GM10248 (cell line): ENCODE measurements at regions of chr9 and their contacts with region 1.

Region 1: DNA sequence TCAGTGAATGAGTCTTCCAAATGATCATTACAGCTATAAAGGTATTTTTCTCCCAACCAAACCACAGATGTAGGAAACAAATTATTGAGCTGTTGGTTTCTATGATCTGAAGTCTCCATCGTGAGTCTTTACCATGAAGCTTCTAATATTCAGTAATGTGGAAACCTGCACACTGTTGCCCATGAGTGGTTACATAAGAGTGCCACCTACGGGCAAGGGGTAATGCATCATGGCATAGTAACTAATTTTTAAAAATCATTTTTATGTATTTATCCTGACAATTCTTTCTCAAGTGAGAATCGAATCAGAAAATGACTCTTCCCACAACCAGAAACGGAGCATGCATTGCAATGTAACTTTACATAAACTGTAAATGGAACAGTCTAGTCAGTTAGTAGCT is 282.5 kb upstream of the SMARCA2 start:
- DNase-seq: no peak
- CTCF ChIP-seq: peak; percentile 41

Region 2: GRCh38 chr9:1718836-1719235 is 13.8 kb before region 1 on chr9:
- CTCF ChIA-PET with region 1: interaction called, 11 read pairs
- POLR2A ChIA-PET with region 1: no interaction called
- DNase-seq: no peak
- CTCF ChIP-seq: no peak

Region 3: GRCh38 chr9:1747417-1747967 is 14.8 kb after region 1 on chr9:
- CTCF ChIA-PET with region 1: interaction called, 29 read pairs
- POLR2A ChIA-PET with region 1: no interaction called
- DNase-seq: no peak
- CTCF ChIP-seq: no peak

Region 4: DNA sequence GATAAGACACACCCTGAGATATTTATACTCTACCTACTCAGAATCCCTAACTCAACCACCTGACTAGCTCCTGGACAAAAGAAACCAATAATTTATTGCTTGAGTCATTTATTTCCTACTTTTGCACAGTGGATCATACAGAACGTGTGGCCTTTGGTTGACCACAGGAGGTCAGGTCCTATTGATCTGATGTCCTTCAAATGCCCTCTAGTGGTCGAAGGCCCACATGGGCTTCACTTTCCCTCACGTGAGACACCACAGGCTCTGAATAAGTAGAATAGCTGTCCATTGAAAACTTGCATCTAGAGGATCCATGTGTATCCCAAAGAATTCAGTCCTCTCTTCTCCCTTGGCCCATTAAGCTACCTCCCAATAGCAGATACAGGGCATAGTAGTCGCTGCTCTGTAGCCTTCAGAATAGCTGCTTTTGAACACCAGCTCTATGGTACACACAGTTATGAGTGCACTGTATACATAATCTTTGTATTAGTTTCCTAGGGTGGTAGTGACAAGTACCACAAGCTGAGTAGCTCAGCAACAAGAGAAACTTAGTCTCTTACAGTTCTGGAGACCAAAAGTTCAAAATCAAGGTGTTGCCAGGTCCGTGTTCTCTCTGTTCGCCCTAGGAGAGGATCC is 104.9 kb after region 1 on chr9:
- CTCF ChIA-PET with region 1: interaction called, 10 read pairs
- POLR2A ChIA-PET with region 1: no interaction called
- DNase-seq: peak; percentile 51
- CTCF ChIP-seq: peak; percentile 48